A549 (cell line): ENCODE measurements at regions of chr5 and their contacts with region 1.

Region 1: DNA sequence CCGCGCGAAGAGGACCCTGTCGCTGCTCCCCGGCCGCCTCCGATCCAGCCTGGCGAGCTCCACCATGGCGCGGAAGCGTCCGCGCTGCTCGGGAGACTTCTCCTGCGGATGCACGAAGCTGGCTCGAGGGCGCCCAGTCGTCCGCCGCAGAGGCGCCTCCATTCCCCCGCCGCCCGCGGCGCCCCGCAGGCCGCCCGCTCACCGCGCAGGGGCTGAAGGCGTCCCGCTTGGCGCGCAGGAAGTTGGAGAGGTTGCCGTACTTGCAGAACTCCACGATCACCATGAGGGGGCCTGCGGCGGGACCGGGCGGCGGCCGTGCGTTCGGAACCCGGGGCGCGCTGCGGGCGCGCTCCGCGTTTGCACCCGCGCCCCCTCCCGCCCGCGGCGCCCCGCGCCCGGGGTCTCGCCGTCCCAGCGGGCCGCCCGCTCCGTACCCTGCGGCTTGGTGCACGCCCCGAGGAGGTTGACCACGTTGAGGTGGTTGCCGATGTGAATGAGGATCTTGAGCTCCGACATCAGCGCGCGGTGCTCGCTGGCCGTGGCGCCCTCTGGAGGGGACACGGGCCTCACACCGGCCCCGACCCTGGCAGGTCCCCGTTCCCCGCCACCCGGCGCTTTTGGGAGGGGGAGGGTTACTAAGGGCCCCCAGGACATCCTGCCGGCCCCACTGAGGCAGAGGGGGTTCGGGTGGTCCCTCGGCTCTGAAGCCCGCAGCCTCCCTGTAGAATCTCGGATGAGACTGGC is 27.7 kb upstream of the SCGB3A1 start:
- DNase-seq: peak; percentile 81 to 83
- ATAC-seq: peak; percentile 85 to 91
- H3K4me3 ChIP-seq: peak overlapping the region; percentile 59
- H3K27ac ChIP-seq: peak overlapping the region; percentile 75 to 87
- H3K4me1 ChIP-seq: no peaks in the 10 kb centered on the region
- CTCF ChIP-seq: peak; percentile 90
- EP300 ChIP-seq: no peak
- POLR2A ChIP-seq: no peak; the same call in 1 of the 2 replicates
- RAD21 ChIP-seq: peak in 1 of 2 experiments; percentile 41; a peak in 3 of 5 replicates

Region 2: GRCh38 chr5:180535573-180535972 is 83.4 kb before region 1 on chr5:
- CTCF ChIA-PET with region 1: no interaction called
- POLR2A ChIA-PET with region 1: no interaction called
- DNase-seq: no peak
- ATAC-seq: no peak
- H3K4me3 ChIP-seq: no peak overlapping the region
- H3K27ac ChIP-seq: no peak overlapping the region
- H3K4me1 ChIP-seq: no peaks in the 10 kb centered on the region
- CTCF ChIP-seq: no peak
- EP300 ChIP-seq: no peak
- POLR2A ChIP-seq: no peak
- RAD21 ChIP-seq: no peak

Region 3: DNA sequence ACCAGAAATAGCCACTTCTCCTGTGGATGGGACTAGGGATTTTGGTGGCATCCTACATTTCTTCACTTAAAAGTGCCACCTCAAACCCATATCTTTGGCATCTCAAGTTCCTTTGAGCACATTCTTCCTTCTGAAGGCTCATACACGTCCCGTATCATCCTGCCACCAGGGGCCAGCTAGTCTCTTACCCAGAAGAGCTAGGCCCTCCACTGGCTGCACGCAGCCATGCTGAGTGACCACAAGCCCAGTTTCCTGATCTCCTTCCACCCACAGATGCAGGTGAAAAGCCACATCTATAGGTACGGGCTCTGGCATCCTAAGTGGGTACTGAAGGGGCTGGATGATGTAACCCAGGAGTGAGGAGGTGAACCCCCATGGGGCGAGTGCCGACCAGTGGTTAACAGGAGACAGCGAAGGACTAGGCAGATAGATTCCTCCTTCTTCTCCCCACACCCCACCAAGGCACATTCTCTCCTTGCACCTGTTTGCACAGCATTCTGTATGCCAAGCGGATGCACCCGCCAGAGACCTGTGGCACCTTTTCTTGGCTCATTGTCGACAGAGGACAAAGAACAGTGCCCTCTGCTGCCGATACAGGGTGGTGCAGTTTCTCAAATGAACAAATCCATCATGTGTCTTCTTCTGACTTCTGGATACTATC is 13.3 kb before region 1 on chr5:
- CTCF ChIA-PET with region 1: interaction called, 14 read pairs
- POLR2A ChIA-PET with region 1: no interaction called
- DNase-seq: peak; percentile 61 to 77
- ATAC-seq: peak; percentile 58 to 75; a peak in 5 of 6 replicates
- H3K4me3 ChIP-seq: no peak overlapping the region
- H3K27ac ChIP-seq: no peak overlapping the region
- H3K4me1 ChIP-seq: no peaks in the 10 kb centered on the region
- CTCF ChIP-seq: peak; percentile 82
- EP300 ChIP-seq: no peak
- POLR2A ChIP-seq: no peak
- RAD21 ChIP-seq: peak; percentile 57 to 71

Region 4: GRCh38 chr5:180630456-180631176 is 11.6 kb after region 1 on chr5:
- CTCF ChIA-PET with region 1: interaction called, 32 read pairs
- POLR2A ChIA-PET with region 1: no interaction called
- DNase-seq: no peak
- ATAC-seq: no peak
- H3K4me3 ChIP-seq: no peak overlapping the region
- H3K27ac ChIP-seq: no peak overlapping the region
- H3K4me1 ChIP-seq: no peaks in the 10 kb centered on the region
- CTCF ChIP-seq: no peak
- EP300 ChIP-seq: no peak
- POLR2A ChIP-seq: no peak
- RAD21 ChIP-seq: no peak

Region 5: DNA sequence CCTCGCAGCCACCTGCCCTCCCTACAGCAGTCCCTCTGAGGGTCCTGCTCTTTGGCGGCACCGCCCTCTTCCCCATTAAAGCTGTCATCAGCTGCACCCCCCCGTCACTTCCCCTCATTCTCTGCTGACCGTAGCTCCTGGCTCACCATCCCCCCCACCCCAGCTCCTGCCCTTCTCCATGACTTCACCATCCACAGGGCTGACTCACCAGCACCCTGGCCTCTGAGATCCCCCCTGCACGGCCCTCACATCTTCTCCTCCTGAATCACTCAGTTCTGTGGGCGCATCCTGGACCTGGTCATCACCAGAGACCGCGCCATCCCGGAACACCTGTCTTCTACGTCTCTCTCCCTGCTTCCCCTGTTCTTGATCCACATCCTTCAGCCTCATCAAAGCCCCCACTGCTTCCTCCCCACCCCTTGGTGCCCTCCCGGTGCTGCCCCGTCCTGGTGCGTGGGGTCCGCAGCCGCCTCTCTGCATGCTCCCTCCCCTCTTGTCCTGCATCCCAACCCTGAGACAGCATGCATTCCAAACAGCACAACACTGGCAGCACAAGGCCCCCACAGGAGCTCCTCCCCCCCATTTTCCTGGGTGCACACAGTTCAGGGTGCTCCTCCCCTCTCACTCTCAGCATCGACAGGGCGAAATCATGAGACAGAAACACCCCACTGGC is 17.5 kb after region 1 on chr5:
- CTCF ChIA-PET with region 1: interaction called, 18 read pairs
- POLR2A ChIA-PET with region 1: no interaction called
- DNase-seq: no peak
- ATAC-seq: peak in 1 of 2 experiments; percentile 35; a peak in 2 of 6 replicates
- H3K4me3 ChIP-seq: no peak overlapping the region
- H3K27ac ChIP-seq: no peak overlapping the region
- H3K4me1 ChIP-seq: no peaks in the 10 kb centered on the region
- CTCF ChIP-seq: no peak
- EP300 ChIP-seq: no peak
- POLR2A ChIP-seq: no peak
- RAD21 ChIP-seq: no peak

Region 6: DNA sequence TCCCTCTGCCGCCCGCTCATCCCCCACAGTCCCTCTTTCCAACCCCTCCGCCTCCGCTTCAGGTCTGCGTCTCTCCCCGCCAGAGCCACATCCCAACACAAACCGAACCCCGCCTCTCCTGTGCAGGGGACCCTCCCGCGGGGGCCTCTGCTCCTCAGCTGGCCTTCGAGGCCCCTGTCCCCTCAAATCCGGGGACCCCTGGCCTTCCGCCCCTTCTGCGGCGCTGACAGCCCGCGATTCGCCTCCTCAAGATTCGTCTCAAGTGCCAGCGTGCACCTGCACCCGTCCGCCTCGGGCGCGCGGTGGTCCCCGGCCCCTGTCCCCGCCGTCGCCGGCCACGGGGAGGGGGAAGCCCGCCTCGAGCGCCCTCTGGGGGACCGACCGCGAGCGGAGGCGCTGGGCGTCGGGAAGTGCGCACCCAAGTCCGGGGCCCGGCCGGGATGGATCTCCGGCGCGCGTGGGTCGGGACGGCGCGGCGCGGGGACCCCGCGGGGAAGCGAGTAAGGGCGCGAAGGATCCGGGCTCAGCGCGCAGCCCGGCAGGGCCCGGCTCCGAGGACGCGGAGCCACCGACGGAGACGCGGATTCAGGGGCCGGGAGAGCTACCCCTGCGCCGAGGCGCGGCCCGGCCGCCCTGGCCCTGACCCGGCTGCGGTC is 29.8 kb after region 1 on chr5:
- CTCF ChIA-PET with region 1: interaction called, 10 read pairs
- POLR2A ChIA-PET with region 1: no interaction called
- DNase-seq: peak; percentile 33 to 73
- ATAC-seq: peak; percentile 60 to 81
- H3K4me3 ChIP-seq: peak overlapping the region; percentile 76
- H3K27ac ChIP-seq: peak overlapping the region; percentile 47 to 78; a peak in 5 of 6 replicates
- H3K4me1 ChIP-seq: no peaks in the 10 kb centered on the region
- CTCF ChIP-seq: peak; percentile 56
- EP300 ChIP-seq: no peak
- POLR2A ChIP-seq: no peak
- RAD21 ChIP-seq: peak; percentile 4 to 19; a peak in 1 of 5 replicates